Heart left ventricle (tissue), 16 donors: ENCODE measurements at regions of chr10 and their contacts with region 1.

Region 1: GRCh38 chr10:42428534-42428933 is 209.8 kb downstream of the ZNF33B start:
- DNase-seq: no peak
- ATAC-seq: no peak
- H3K4me3 ChIP-seq: no peak overlapping the region
- H3K27ac ChIP-seq: no peak overlapping the region
- H3K4me1 ChIP-seq: no peaks in the 10 kb centered on the region
- H3K27me3 ChIP-seq: no peaks in the 10 kb centered on the region
- CTCF ChIP-seq: peak; percentile 19 to 60 (median 44)
- POLR2A ChIP-seq: no peak

Region 2: GRCh38 chr10:42177077-42177792 is 251.3 kb before region 1 on chr10:
- intact Hi-C with region 1: loop called in 1 of 10 experiments (anchors 10 kb)
- DNase-seq: no peak
- ATAC-seq: no peak
- H3K4me3 ChIP-seq: peak overlapping the region in 1 of 12 donors; percentile 14
- H3K27ac ChIP-seq: no peak overlapping the region
- H3K4me1 ChIP-seq: peaks cover 0 to 3% (median 0%) of the 10 kb centered on the region in 12 donors
- H3K27me3 ChIP-seq: peaks cover 0 to 43% (median 17%) of the 10 kb centered on the region in 9 donors
- CTCF ChIP-seq: no peak
- POLR2A ChIP-seq: no peak